GM12878 (cell line): ENCODE measurements at regions of chr11 and their contacts with region 1.

Region 1: DNA sequence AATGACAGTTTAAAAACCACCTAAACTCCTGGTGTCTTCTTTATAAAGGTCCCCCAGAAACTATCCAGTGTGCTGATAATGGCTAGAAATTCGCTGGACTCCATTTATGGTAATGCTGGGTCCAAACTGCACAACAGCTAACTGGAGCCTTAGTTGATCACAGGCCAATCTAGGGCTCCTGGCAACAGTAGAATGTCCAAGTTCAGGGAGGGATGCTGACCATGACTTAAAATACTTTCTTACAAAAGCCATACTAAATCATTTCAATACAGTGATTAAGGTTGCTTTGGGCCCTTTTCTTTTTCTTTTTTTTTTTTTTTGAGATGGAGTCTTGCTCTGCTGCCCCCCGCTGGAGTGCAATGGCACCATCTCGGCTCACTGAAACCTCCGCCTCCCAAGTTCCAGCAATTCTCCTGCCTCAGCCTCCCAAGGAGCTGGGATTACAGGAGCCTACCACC is 14.5 kb upstream of the GAB2 start:
- DNase-seq: no peak
- ATAC-seq: no peak
- H3K4me3 ChIP-seq: no peak overlapping the region
- H3K27ac ChIP-seq: no peak overlapping the region
- H3K4me1 ChIP-seq: peaks cover 27% of the 10 kb centered on the region
- H3K27me3 ChIP-seq: no peaks in the 10 kb centered on the region
- CTCF ChIP-seq: peak in 2 of 3 experiments; percentile 35 to 41; a peak in 2 of 6 replicates
- EP300 ChIP-seq: no peak
- POLR2A ChIP-seq: no peak
- RAD21 ChIP-seq: peak; percentile 38; the same call in 1 of the 2 replicates

Region 2: DNA sequence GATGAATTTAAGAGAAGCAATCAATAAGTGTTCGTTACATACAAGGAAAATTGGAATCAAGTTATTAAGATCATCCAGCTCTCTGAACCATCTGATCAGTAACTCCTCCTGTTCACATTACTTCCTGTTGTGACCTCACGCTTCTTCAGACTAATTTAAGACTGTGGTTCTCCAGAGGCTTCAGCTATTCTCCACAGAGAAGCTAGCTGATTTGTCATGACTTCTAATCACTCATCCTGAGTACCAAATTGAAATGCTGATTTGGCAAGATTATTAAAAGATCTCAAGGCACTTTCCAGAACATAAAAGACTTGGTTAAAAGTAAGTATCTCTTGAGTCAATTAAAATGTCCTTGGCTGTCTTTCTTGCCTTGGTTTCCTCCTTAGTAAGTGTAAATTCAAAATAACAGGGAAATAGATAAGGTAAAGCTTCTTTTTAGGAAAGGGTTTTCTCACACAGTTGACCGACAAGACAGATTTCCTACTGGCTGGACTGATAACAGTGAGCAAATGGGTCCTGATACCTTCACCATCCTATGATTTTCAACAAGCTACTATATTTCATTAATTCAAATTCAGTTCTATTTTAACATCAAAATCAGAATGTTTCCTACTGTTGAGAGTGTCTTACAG is 52.9 kb before region 1 on chr11:
- CTCF ChIA-PET with region 1: no interaction called
- POLR2A ChIA-PET with region 1: no interaction called
- RAD21 ChIA-PET with region 1: no interaction called
- SMC1A ChIA-PET with region 1: no interaction called
- in situ Hi-C with region 1: no loop called
- intact Hi-C with region 1: no loop called
- DNase-seq: no peak
- ATAC-seq: no peak
- H3K4me3 ChIP-seq: no peak overlapping the region
- H3K27ac ChIP-seq: no peak overlapping the region
- H3K4me1 ChIP-seq: no peaks in the 10 kb centered on the region
- H3K27me3 ChIP-seq: no peaks in the 10 kb centered on the region
- CTCF ChIP-seq: no peak
- EP300 ChIP-seq: no peak
- POLR2A ChIP-seq: no peak
- RAD21 ChIP-seq: no peak

Region 3: DNA sequence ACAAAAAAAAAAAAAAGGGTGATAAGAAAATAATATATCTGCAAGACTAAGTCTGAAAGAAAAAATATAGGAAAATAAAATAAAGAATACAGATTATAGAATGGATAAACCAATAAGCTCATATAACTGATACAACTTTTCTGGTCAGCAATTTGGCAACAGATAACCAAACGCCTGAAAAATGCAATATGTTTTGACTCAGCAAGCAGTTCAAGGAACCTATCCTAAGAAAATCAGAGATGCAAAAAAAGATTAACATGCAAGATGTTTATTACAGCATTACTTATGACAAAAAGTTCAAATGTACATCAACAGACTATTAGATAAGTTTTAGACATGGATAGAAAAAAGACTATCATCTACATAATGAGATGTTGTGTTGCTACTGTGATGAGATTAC is 12.6 kb after region 1 on chr11:
- CTCF ChIA-PET with region 1: interaction called, 3 read pairs
- POLR2A ChIA-PET with region 1: no interaction called
- RAD21 ChIA-PET with region 1: interaction called, 4 read pairs
- SMC1A ChIA-PET with region 1: interaction called, 14 read pairs
- in situ Hi-C with region 1: no loop called
- intact Hi-C with region 1: no loop called
- DNase-seq: no peak
- ATAC-seq: no peak
- H3K4me3 ChIP-seq: no peak overlapping the region
- H3K27ac ChIP-seq: no peak overlapping the region
- H3K4me1 ChIP-seq: peaks cover under 1% of the 10 kb centered on the region; the same call in 1 of the 2 replicates
- H3K27me3 ChIP-seq: no peaks in the 10 kb centered on the region
- CTCF ChIP-seq: no peak
- EP300 ChIP-seq: no peak
- POLR2A ChIP-seq: no peak
- RAD21 ChIP-seq: no peak

Region 4: GRCh38 chr11:78533399-78533798 is 101.3 kb after region 1 on chr11:
- CTCF ChIA-PET with region 1: no interaction called
- POLR2A ChIA-PET with region 1: no interaction called
- RAD21 ChIA-PET with region 1: interaction called, 5 read pairs
- SMC1A ChIA-PET with region 1: interaction called, 12 read pairs
- in situ Hi-C with region 1: no loop called
- intact Hi-C with region 1: no loop called
- DNase-seq: peak; percentile 44
- ATAC-seq: peak; percentile 86
- H3K4me3 ChIP-seq: no peak overlapping the region
- H3K27ac ChIP-seq: peak overlapping the region; percentile 74
- H3K4me1 ChIP-seq: peaks cover 21% of the 10 kb centered on the region
- H3K27me3 ChIP-seq: no peaks in the 10 kb centered on the region
- CTCF ChIP-seq: no peak
- EP300 ChIP-seq: no peak
- POLR2A ChIP-seq: no peak
- RAD21 ChIP-seq: no peak